Caco-2 (cell line): ENCODE measurements at regions of chr1 and their contacts with region 1.

Region 1: DNA sequence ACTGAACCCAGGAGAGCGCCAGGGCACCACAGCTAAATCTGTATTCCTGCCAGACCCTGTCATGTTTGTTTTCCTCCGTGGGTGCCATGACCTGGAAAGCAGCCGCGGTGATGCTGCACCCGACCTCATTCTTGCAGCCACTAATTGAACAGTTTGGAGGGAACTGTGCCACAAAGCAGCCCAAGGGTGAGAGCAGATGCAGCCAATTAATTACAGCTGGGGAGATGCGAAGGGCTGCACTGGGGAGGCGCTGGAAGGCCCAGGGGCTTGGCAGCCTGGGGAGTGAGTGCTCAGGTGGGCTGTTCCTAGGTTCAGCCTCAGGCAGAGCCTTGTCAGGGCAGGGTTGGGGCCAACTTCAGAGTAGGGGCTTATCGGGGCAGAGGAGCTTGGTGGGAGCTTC is 158.4 kb upstream of the CD34 start:
- DNase-seq: no peak
- H3K4me3 ChIP-seq: no peak overlapping the region
- H3K4me3 Mint-ChIP-seq: no peak overlapping the region
- H3K27ac Mint-ChIP-seq: no peak overlapping the region
- H3K4me1 ChIP-seq: no peaks in the 10 kb centered on the region
- H3K4me1 Mint-ChIP-seq: no peaks in the 10 kb centered on the region
- H3K27me3 ChIP-seq: no peaks in the 10 kb centered on the region; the same call in 1 of the 2 replicates
- H3K27me3 Mint-ChIP-seq: no peaks in the 10 kb centered on the region
- CTCF ChIP-seq: no peak

Region 2: GRCh38 chr1:206865013-206865671 is 1204.2 kb before region 1 on chr1 and contains the start of gene IL20:
- CTCF ChIA-PET with region 1: no interaction called
- POLR2A ChIA-PET with region 1: interaction called, 10 read pairs
- intact Hi-C with region 1: no loop called
- DNase-seq: peak; percentile 65 to 73
- H3K4me3 ChIP-seq: no peak within 1 kb of the TSS
- H3K4me3 Mint-ChIP-seq: no peak within 1 kb of the TSS
- H3K27ac Mint-ChIP-seq: no peak within 1 kb of the TSS
- H3K4me1 ChIP-seq: no peaks in the 10 kb centered on the region
- H3K4me1 Mint-ChIP-seq: no peaks in the 10 kb centered on the region
- H3K27me3 ChIP-seq: no peaks in the 10 kb centered on the region
- H3K27me3 Mint-ChIP-seq: peaks cover 15% of the 10 kb centered on the region
- CTCF ChIP-seq: peak; percentile 71 to 73
- total RNA-seq, gene IL20: not detected in 2 replicates